ENCODE measurements at regions of chr3 and their contacts with region 1.

Region 1: GRCh38 chr3:152574461-152575079 is 260.4 kb upstream of the P2RY1 start:
- DNase-seq: no peak
- H3K4me3 ChIP-seq: no peak overlapping the region
- CTCF ChIP-seq: peak; percentile 61

Region 2: GRCh38 chr3:152376351-152377183 is 198.0 kb before region 1 on chr3:
- CTCF ChIA-PET with region 1: no interaction called
- POLR2A ChIA-PET with region 1: no interaction called
- DNase-seq: peak; percentile 63
- H3K4me3 ChIP-seq: no peak overlapping the region; the same call in 1 of the 2 replicates
- CTCF ChIP-seq: no peak

Region 3: GRCh38 chr3:152399374-152399773 is 175.2 kb before region 1 on chr3:
- CTCF ChIA-PET with region 1: no interaction called
- POLR2A ChIA-PET with region 1: no interaction called
- DNase-seq: no peak
- H3K4me3 ChIP-seq: no peak overlapping the region
- CTCF ChIP-seq: no peak

Region 4: DNA sequence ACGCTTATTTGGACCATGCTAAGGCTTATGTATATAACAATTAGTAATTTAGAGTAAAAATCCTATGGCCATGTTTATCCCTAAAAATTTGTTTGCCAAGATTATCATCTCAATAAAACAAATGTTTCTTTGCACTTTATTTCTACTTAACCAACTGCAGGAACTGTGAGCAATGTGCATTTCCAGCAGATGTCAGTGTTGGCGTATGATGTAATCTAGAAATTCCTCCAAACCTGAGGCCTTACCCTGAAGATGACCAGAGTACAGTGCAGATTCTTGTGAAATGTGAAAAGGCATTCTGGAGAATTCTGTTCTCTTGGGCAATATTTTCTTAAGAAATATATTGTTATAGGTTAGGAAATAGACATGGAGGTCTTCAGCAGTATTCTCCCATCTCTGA is 100.0 kb before region 1 on chr3:
- CTCF ChIA-PET with region 1: interaction called, 11 read pairs
- POLR2A ChIA-PET with region 1: no interaction called
- DNase-seq: no peak
- H3K4me3 ChIP-seq: no peak overlapping the region
- CTCF ChIP-seq: peak; percentile 37